HEK293 (cell line): ENCODE measurements at regions of chr2 and their contacts with region 1.

Region 1: GRCh38 chr2:47373747-47374146 is 29.2 kb upstream of the MSH2 start:
- H3K4me3 ChIP-seq: no peak overlapping the region
- H3K27ac ChIP-seq: no peak overlapping the region
- H3K4me1 ChIP-seq: no peaks in the 10 kb centered on the region
- CTCF ChIP-seq: 0 out of 2 replicates have a peak, but pooled peaks have one; percentile 28

Region 2: DNA sequence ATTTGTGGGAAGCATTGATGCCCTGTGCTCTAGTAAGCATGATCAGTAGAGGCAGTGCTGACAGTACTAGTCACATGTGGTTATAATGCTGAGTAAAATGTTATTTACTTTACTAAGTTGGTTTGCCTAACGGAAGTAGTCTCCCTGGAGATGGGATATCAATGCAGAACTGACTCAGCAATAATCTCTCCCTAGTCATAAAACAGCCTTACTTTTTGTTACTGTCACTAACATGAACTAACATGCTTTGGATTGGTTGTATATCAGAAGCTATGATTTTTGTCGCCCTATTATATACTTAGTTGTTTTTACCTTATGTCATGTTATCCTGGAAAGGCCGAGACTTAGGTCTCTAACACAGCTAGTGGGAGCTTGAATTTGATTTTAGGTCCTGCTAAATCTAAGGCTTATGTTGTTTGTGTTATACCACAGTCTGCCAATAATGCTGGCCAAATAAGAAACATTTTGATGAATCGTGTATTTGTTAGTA is 624.7 kb before region 1 on chr2:
- CTCF ChIA-PET with region 1: no interaction called
- POLR2A ChIA-PET with region 1: no interaction called
- H3K4me3 ChIP-seq: no peak overlapping the region
- H3K27ac ChIP-seq: no peak overlapping the region
- H3K4me1 ChIP-seq: no peaks in the 10 kb centered on the region; the same call in 1 of the 2 replicates
- CTCF ChIP-seq: no peak

Region 3: DNA sequence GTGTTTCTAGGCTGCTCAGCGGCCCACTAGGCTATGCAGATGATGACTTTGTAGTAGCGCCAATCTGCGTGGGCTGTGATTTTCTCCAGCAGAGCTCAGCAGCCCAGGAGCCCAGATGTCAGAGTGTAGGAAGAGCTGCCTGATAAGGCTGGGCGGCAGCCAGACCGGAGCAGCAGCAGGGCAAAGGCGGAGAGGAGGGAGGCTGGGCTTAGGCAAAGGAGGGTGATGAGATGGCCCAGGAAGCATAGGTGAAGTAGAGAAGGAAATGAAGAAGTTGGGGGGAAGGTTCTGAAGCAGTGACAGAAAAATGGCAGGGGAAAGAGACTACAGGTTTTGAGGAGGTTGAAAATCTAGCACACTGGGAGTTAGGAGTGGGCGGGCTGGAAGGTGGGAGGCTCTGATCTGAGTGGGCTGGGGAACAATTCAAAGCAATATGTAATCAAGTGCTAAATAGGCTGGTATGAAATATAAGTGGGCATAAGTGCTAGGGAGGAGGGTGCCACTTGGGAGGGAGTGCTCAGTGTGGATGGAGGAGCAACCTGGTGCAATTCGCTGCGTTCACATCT is 168.1 kb before region 1 on chr2:
- CTCF ChIA-PET with region 1: no interaction called
- POLR2A ChIA-PET with region 1: no interaction called
- H3K4me3 ChIP-seq: no peak overlapping the region
- H3K27ac ChIP-seq: no peak overlapping the region
- H3K4me1 ChIP-seq: peaks cover 7% of the 10 kb centered on the region
- CTCF ChIP-seq: no peak

Region 4: GRCh38 chr2:47336259-47337238 is 37.2 kb before region 1 on chr2:
- CTCF ChIA-PET with region 1: interaction called, 43 read pairs
- POLR2A ChIA-PET with region 1: interaction called, 6 read pairs
- H3K4me3 ChIP-seq: no peak overlapping the region
- H3K27ac ChIP-seq: no peak overlapping the region
- H3K4me1 ChIP-seq: no peaks in the 10 kb centered on the region
- CTCF ChIP-seq: no peak

Region 5: DNA sequence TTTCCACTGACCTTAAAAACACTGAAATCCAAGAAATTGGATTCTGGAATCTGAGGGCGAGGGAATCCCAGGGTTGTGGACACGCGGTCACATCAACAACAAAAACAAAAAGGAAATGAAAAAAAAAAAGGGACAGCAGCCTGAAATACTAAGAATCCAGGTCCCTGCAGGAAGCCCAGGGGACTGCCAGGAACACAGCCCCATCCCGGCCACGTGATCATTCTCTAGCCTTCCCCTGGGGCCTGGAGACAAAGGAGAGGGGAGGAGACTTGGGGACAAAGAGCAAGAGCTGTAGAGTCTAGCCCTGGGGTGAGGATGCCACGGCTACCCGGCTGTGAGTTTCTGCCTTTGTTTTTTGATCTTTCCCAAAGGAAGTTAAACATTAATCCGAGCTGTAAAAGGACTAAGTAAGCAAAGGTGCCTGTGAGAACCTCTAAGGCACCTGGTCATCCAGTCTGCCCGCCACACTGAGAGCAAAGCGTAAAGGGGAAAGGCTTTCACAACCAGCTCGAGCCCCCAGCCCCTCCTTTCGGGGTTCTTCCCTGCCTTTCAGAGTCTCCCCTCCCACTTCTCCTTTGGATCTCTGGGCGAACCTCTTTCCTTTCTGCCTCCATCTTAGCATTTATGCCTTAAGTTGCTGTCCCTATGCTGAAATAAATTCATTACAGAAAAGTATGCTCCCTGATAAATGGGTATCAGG is 28.7 kb before region 1 on chr2:
- CTCF ChIA-PET with region 1: interaction called, 13 read pairs
- POLR2A ChIA-PET with region 1: interaction called, 3 read pairs
- H3K4me3 ChIP-seq: peak overlapping the region; percentile 25
- H3K27ac ChIP-seq: peak overlapping the region; percentile 86
- H3K4me1 ChIP-seq: peaks cover 11% of the 10 kb centered on the region
- CTCF ChIP-seq: peak; percentile 31; the same call in 1 of the 2 replicates

Region 6: GRCh38 chr2:47386551-47386950 is 12.8 kb after region 1 on chr2:
- CTCF ChIA-PET with region 1: interaction called, 13 read pairs
- POLR2A ChIA-PET with region 1: interaction called, 4 read pairs
- H3K4me3 ChIP-seq: no peak overlapping the region
- H3K27ac ChIP-seq: no peak overlapping the region
- H3K4me1 ChIP-seq: no peaks in the 10 kb centered on the region
- CTCF ChIP-seq: no peak